ENCODE measurements at regions of chr16 and their contacts with region 1.

Region 1: GRCh38 chr16:67561824-67562525 is 351 bp upstream of the CTCF start:
- DNase-seq: peak; percentile 91
- H3K4me3 ChIP-seq: peak overlapping the region; percentile 72
- H3K27ac ChIP-seq: peak overlapping the region; percentile 75
- H3K27me3 ChIP-seq: no peaks in the 10 kb centered on the region
- CTCF ChIP-seq: no peak

Region 2: GRCh38 chr16:67571981-67572431 is 10.0 kb after region 1 on chr16:
- CTCF ChIA-PET with region 1: interaction called, 8 read pairs
- POLR2A ChIA-PET with region 1: interaction called, 17 read pairs
- DNase-seq: no peak
- H3K4me3 ChIP-seq: no peak overlapping the region
- H3K27ac ChIP-seq: peak overlapping the region; percentile 65
- H3K27me3 ChIP-seq: no peaks in the 10 kb centered on the region
- CTCF ChIP-seq: no peak

Region 3: DNA sequence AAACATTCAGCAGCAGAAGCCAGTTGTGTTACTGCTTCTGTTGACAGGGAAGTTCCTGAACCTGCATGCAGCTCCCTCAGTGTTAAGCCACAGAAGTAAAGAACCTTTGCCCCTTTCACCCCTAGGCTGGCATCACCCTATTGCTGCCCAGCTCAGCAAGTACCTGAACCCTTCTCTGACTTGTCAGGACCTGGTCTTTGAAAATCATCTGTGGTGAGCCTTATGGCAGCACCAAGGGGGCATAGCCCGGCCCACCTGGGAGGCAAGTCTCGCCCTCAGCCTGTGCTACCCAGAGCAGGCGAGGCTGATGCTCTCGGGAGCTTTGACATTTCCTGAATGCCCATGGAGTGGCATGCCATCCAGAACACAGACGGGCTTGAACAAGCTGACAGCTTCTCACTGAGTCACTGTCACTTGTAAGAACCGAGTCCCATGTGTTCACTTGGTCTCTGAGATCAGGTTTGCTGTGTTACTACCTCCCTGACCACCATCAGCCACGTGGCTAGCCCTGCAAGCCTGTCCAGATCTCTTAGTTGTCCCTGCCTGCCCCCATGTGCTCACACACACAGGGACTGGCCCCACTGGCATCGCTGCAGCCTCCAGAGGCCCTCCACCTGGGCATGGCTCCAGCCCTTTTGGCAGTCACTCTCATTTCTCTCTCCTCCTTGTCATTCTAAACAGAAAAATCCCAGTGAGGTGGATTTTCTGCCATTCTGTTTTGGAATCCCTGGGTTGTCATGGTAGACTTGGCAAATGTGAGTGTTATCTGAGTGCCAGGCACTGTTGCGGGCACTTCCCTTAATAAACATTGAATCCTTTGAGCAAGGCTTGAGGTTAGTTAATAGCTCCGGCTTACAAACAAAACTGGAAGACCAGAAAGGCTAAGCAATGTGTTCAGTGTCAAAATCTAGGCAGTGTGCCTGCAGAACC is 80.1 kb after region 1 on chr16:
- CTCF ChIA-PET with region 1: interaction called, 13 read pairs
- POLR2A ChIA-PET with region 1: no interaction called
- DNase-seq: no peak
- H3K4me3 ChIP-seq: no peak overlapping the region
- H3K27ac ChIP-seq: no peak overlapping the region
- H3K27me3 ChIP-seq: peaks cover 22% of the 10 kb centered on the region
- CTCF ChIP-seq: no peak

Region 4: GRCh38 chr16:67660564-67661028 is 98.6 kb after region 1 on chr16 and contains the start of gene PARD6A:
- CTCF ChIA-PET with region 1: interaction called, 32 read pairs
- POLR2A ChIA-PET with region 1: interaction called, 15 read pairs
- DNase-seq: peak; percentile 91
- H3K4me3 ChIP-seq: peak within 1 kb of the TSS; percentile 92
- H3K27ac ChIP-seq: peak within 1 kb of the TSS; percentile 91
- H3K27me3 ChIP-seq: no peaks in the 10 kb centered on the region
- CTCF ChIP-seq: no peak
- polyA plus RNA-seq, gene PARD6A: 0.42 and 0.53 TPM in 2 replicates

Region 5: DNA sequence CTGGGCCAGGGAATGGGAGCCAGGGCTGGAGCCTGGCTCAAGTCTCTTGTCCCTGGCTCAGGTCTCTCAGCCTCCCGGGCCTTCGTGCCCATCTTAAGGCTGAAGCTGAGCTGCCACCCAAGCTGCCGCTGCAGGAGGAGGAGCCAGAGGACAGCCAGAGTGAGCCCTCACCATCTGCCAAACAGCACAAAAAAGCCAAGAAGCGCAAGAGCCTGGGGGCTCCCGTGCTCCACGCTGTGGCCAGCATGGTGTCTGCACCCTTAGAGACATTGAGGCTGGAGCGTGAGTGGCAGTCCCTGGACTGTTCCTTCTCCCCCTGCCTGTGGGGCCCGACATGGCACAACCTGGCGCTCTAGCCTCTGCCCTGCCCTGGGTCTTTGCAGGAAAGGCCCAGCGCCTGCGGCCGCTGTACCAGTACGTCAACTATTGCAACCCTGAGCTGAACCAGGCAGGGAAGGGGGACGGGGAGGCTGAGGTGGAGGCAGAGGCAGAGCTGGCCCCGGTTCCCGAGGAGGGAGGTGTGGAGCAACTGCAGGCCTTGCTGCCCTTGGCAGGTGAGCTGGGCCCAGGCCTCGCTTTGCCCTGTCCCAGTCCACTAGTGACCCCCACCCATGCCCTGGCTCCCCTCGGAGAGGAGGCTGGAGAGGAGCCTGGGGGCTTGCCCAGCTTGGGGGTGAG is 106.0 kb after region 1 on chr16:
- CTCF ChIA-PET with region 1: interaction called, 32 read pairs
- POLR2A ChIA-PET with region 1: interaction called, 3 read pairs
- DNase-seq: peak; percentile 79
- H3K4me3 ChIP-seq: no peak overlapping the region
- H3K27ac ChIP-seq: peak overlapping the region; percentile 57
- H3K27me3 ChIP-seq: no peaks in the 10 kb centered on the region
- CTCF ChIP-seq: peak; percentile 91

Measured in AG04450 (cell line).